AG04450 (cell line): ENCODE measurements at regions of chr17 and their contacts with region 1.

Region 1: DNA sequence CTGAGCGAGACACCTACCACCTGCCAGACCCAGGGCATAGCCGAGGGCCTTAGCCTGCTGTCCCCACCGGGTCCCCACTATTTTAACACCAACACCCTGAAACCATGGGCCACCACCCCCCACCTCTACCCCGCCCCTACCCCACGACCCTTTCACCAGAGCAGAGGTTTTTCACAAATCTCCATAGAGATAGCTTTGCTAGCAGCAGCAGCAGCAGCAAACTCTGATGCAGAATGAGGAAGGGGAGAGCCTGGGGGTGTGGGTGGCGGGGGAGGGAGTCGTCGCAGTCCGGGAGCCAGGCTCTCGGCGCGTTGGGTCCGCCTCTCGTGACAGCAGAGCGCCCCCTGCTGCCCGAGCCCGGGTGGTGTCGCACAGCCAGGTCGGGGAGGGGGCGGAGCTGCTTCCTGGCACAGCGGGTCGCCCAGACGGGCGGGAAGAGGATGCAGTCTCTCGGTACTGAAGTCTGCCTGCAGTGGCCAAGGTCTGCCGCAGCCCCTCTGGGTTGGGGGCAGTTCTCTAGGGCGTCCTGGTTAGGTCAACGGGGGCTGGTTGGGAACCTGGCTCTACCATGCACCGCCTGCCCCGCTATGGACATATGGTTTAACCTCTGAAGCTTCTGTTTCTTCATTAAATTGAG is 38.1 kb upstream of the CCDC182 start:
- DNase-seq: no peak
- H3K4me3 ChIP-seq: no peak overlapping the region
- H3K27ac ChIP-seq: no peak overlapping the region
- H3K27me3 ChIP-seq: peaks cover 34% of the 10 kb centered on the region
- CTCF ChIP-seq: peak; percentile 60

Region 2: DNA sequence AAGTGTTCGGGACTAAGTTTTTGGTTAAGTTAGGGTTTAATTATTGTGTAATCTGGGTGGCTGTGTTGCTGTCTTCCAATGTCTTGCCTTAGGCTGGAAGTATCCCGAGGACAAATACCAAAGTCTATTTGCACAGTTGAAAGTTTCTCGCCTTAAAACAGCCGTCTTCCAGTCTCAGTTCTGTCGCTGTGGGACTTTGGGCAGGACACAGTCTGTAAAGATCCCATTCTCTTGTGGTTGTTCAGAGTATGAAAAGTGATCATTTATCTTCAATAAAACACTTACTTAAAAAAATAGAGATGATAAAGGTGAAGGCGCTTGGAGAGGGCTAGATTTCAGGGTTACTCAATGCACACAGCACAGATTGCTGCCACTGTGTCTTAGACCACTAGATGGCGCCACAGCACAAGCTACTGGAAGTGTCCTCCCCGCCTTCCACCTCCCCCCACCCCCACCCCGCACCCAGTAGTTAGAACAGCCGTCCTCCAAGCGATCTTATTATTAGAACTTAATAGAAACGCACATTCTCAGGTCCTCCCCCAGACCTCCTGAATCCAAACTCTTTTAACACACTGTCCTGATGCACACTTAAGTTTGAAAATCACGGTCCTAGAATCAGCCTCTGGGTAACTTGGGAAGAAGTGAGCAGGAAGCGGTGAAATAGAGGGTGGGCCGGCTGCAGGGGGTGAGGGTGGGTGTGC is 652.3 kb before region 1 on chr17:
- CTCF ChIA-PET with region 1: interaction called, 12 read pairs
- POLR2A ChIA-PET with region 1: no interaction called
- DNase-seq: peak; percentile 46
- H3K4me3 ChIP-seq: peak overlapping the region; percentile 43
- H3K27ac ChIP-seq: no peak overlapping the region
- H3K27me3 ChIP-seq: peaks cover 8% of the 10 kb centered on the region
- CTCF ChIP-seq: peak; percentile 82

Region 3: GRCh38 chr17:57651451-57651850 is 131.8 kb before region 1 on chr17:
- CTCF ChIA-PET with region 1: interaction called, 10 read pairs
- POLR2A ChIA-PET with region 1: no interaction called
- DNase-seq: no peak
- H3K4me3 ChIP-seq: no peak overlapping the region
- H3K27ac ChIP-seq: no peak overlapping the region
- H3K27me3 ChIP-seq: no peaks in the 10 kb centered on the region
- CTCF ChIP-seq: no peak

Region 4: DNA sequence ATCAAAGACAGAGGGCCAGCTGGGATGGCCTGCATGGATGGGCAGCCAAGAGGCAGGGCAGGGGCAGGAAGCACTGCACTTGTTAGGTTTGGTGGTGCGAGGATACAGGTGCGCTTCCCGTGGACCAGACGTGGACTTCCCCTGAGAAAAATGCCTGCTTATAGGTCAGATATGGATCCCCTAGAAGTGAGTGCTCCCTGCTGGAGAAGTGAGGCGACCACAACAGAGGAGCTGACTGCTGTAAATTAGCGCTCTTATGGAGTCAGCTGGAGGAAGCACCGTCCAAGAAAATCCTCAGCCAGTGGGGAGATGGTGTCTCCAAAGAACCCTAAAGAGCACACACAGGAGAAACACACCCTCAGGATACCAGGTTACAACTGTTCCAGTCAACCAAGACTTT is 10.4 kb before region 1 on chr17:
- CTCF ChIA-PET with region 1: interaction called, 16 read pairs
- POLR2A ChIA-PET with region 1: no interaction called
- DNase-seq: no peak
- H3K4me3 ChIP-seq: no peak overlapping the region
- H3K27ac ChIP-seq: no peak overlapping the region
- H3K27me3 ChIP-seq: peaks cover 39% of the 10 kb centered on the region
- CTCF ChIP-seq: no peak

Region 5: DNA sequence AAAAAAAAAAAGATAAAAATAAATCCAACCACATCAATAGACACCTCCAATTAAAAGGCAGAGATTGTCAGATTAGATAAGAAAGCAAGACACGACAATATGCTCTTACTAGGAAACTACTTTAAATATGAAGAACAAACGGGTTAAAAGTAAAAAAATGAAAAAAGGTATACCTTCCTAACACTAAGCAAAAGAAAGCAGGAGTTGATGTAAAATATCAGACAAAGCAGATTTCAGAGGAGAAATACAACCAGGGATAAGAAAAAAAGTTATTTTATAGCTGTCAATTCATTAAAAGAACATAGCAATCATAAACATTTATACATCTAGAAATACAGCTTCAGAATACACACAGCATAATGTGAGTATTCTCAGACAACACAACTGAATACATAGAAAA is 11.6 kb after region 1 on chr17:
- CTCF ChIA-PET with region 1: interaction called, 20 read pairs
- POLR2A ChIA-PET with region 1: no interaction called
- DNase-seq: no peak
- H3K4me3 ChIP-seq: no peak overlapping the region
- H3K27ac ChIP-seq: no peak overlapping the region
- H3K27me3 ChIP-seq: peaks cover 6% of the 10 kb centered on the region
- CTCF ChIP-seq: no peak